Activated CD8-positive, alpha-beta memory T cell treated with anti-CD3 and anti-CD28 coated beads, Interleukin-2, amount 10 ng/mL, durations not matched to agents 7 days and 5 days (primary cell): ENCODE measurements at regions of chr3 and their contacts with region 1.

Region 1: DNA sequence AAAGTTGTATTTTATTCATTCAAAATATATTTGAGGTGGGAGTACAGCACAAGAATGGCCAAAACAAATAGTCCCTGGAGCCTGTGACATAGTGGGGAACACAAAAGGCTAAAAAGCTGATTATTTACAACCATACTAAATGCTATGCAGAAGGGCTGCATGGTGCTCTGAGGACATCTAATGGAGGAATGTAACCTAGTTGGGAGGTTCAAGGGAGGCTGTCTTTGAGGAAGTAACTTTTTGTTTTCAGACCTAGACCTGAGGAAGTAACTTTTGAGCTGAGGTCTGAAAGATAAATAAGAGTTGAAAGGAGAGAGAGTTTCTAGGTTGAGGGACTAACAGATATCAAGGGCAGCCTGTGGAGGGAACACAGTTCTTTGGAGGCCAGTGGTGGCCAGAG is 34.8 kb upstream of the RASA2 start:
- DNase-seq: peak; percentile 72
- ATAC-seq: peak; percentile 90
- H3K4me3 Mint-ChIP-seq: no peak overlapping the region
- H3K27ac Mint-ChIP-seq: no peak overlapping the region
- H3K4me1 Mint-ChIP-seq: peaks cover 12% of the 10 kb centered on the region
- H3K27me3 Mint-ChIP-seq: no peaks in the 10 kb centered on the region

Region 2: DNA sequence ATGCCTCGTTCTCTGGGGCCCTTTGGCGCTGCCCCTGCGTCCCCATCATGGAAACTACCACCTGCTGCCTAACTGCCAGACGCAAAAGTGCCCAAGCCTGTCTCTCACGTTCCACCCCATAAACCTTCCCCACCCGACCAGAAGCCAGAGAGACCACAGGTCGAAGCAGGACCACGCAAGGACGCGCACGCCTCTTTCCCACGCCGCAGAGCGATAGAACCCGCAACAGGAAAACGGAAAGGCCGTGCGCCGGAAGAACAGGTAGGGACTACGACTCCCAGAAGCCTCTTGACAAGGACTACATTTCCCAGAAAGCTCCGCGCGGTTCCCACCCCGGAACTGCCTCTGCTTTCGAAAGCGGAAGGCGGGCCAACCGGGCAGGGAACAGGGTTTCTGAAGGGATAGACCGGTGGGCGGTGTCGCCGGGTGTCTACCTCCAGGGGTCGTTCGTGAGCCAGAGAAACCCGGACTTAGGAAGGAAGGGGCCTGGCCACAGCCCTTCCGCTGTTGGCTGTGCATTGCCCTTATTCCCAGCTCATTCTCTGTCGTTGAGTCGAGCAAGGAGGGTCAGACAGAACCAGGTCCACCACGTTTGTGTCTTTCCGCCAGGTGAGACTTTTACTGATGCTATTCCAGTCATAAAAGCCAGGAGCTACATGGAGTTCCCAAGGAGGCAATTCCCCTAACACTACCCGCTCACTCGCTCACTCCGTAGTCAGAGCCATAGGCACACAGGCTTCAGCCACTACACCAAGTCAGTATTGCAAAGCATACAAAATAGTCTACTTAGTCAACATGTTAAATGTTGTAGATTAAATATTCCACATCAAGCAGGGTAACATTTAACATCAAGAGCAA is 140.3 kb before region 1 on chr3:
- CTCF ChIA-PET with region 1: interaction called, 334 read pairs
- DNase-seq: peak; percentile 100
- ATAC-seq: peak; percentile 95
- H3K4me3 Mint-ChIP-seq: peak overlapping the region; percentile 91
- H3K27ac Mint-ChIP-seq: peak overlapping the region; percentile 98
- H3K4me1 Mint-ChIP-seq: peaks cover 44% of the 10 kb centered on the region
- H3K27me3 Mint-ChIP-seq: no peaks in the 10 kb centered on the region

Region 3: DNA sequence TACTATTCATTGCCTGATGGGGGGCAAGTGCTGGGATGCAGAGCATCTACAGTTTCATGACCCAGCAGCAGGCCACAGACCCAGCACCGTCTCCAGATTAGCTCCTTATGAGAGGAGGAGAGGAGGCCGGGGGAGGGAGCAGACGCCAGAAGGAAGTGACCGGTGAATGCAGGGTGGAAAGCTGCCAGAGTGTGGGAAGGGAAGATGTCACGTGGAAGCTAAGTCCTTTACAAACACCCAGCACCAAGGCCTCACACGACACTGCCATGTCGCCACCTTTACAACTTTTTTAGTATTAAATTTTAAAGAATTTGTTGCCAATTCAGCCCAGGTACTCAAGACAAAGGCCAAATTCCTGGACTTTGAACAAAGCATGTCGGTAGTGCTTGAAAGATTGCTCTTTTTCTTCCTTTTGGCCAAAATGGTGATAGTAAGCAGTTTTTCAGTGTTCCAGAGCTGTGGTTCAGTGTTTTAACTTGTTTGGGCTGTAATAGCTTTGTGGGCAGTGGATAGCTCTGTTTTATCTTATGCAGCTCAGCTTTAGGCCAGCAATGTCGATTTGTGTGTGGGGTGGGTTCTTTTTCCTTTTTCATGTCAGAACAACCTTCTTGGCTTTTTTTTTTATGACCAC is 25.5 kb before region 1 on chr3:
- CTCF ChIA-PET with region 1: interaction called, 16 read pairs
- DNase-seq: no peak
- ATAC-seq: no peak
- H3K4me3 Mint-ChIP-seq: no peak overlapping the region
- H3K27ac Mint-ChIP-seq: no peak overlapping the region
- H3K4me1 Mint-ChIP-seq: peaks cover 31% of the 10 kb centered on the region
- H3K27me3 Mint-ChIP-seq: no peaks in the 10 kb centered on the region

Region 4: DNA sequence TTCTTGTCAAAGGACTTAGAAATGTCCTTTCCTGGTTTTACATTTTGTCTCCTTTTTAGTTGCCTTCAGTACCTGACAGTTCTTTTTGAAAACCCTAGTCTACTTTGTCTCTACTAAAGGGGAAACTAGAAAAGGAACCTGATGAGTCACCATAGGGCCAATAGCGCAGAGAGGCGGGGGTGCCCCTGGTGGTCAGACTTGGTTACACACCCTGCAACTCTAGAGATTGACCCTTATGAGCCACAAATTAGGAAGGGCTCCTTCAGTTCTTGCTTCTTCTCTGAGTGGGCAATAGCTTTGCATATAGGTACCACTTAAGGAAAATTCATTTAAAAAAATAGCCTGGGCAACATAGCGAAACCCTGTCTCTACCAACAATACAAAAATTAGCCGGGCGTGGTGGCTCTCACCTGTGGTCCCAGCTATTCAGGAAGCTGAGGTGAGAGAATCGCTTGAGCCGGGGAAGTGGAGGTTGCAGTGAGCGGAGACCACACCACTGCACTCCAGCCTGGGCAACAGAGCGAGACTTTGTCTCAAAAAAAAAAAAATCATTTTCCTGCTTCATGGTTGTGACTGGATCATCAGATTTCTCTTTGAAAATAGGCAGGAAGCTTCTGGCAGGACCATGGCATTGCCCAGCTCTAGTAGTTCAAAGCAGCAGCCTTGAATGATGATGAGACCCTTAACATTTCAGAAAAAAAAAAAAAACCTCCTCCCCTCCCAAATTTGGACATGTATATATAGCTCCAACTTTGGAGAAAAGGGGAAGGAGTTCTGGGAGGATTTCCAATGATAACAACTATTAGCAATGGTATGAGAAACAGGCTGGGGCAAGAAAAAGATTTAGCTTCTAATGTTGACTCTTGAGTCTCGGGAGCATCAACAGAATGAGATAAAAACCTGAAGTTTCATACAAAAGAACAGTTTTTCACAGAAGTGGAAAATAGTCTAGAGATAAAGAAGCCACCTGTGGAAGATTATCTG is 10.4 kb before region 1 on chr3:
- CTCF ChIA-PET with region 1: interaction called, 51 read pairs
- DNase-seq: peak; percentile 90
- ATAC-seq: peak; percentile 100
- H3K4me3 Mint-ChIP-seq: peak overlapping the region; percentile 60
- H3K27ac Mint-ChIP-seq: peak overlapping the region; percentile 92
- H3K4me1 Mint-ChIP-seq: peaks cover 36% of the 10 kb centered on the region
- H3K27me3 Mint-ChIP-seq: no peaks in the 10 kb centered on the region

Region 5: DNA sequence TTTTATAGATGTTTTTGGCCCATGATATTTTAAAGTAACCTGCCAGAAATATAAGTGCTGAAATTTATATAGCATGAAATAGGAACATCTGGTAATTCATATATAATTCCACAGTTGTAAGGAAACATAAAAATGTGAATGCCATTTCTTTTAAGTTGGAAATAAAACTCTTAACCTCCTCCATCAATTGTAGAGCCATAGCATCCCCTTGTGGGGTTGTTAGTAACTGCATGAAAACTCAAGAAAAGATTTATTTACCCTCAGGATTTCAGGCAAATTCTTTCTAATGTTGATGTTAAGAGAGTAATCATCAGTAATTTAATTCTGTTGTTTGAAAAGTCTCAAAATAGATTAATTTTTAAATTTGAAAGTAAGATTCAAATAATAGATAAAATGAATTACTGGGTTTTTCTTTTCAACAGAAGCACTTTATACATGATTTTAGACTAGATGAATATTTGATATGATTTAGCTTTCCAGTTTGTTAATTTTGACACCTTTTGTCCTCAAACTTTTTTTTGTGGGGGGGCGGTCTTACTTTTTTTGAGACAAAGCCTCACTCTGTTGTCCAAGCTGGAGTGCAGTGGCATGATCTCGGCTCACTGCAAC is 109.5 kb after region 1 on chr3:
- CTCF ChIA-PET with region 1: interaction called, 116 read pairs
- DNase-seq: peak; percentile 48
- ATAC-seq: no peak
- H3K4me3 Mint-ChIP-seq: no peak overlapping the region
- H3K27ac Mint-ChIP-seq: peak overlapping the region; percentile 52
- H3K4me1 Mint-ChIP-seq: peaks cover 21% of the 10 kb centered on the region
- H3K27me3 Mint-ChIP-seq: no peaks in the 10 kb centered on the region